ENCODE measurements at regions of chr12 and their contacts with region 1.

Region 1: GRCh38 chr12:22334410-22335290 is at the start of gene ST8SIA1:
- DNase-seq: peak in 1 of 2 experiments; percentile 61
- H3K4me3 ChIP-seq: peak within 1 kb of the TSS; percentile 53 to 89 (median 67)
- H3K27ac ChIP-seq: no peak within 1 kb of the TSS
- H3K4me1 ChIP-seq: peaks cover 0 to 6% (median 0%) of the 10 kb centered on the region in 4 experiments; a peak in 3 of 7 replicates
- H3K27me3 ChIP-seq: peaks cover 6 to 26% (median 17%) of the 10 kb centered on the region in 4 experiments
- CTCF ChIP-seq: no peak
- EP300 ChIP-seq: no peak
- POLR2A ChIP-seq: no peak
- RAD21 ChIP-seq: no peak
- total RNA-seq, gene ST8SIA1: 3.2 and 4.4 TPM in 2 replicates

Region 2: GRCh38 chr12:22121227-22121626 is 213.4 kb before region 1 on chr12:
- CTCF ChIA-PET with region 1: interaction called, 11 read pairs
- POLR2A ChIA-PET with region 1: no interaction called
- DNase-seq: peak in 1 of 2 experiments; percentile 68
- H3K4me3 ChIP-seq: no peak overlapping the region
- H3K27ac ChIP-seq: no peak overlapping the region
- H3K4me1 ChIP-seq: no peaks in the 10 kb centered on the region
- H3K27me3 ChIP-seq: no peaks in the 10 kb centered on the region
- CTCF ChIP-seq: peak; percentile 80 to 84 (median 83)
- EP300 ChIP-seq: no peak
- POLR2A ChIP-seq: no peak
- RAD21 ChIP-seq: peak; percentile 72 to 74

Region 3: GRCh38 chr12:22231836-22232235 is 102.8 kb before region 1 on chr12:
- CTCF ChIA-PET with region 1: interaction called, 11 read pairs
- POLR2A ChIA-PET with region 1: no interaction called
- DNase-seq: no peak
- H3K4me3 ChIP-seq: no peak overlapping the region
- H3K27ac ChIP-seq: no peak overlapping the region
- H3K4me1 ChIP-seq: 0 out of 7 replicates have a peak, but pooled peaks cover 0 to 2% (median 0%) of the 10 kb centered on the region in 4 experiments
- H3K27me3 ChIP-seq: no peaks in the 10 kb centered on the region
- CTCF ChIP-seq: peak in 2 of 3 experiments; percentile 59 to 62; a peak in 3 of 4 replicates
- EP300 ChIP-seq: no peak
- POLR2A ChIP-seq: no peak
- RAD21 ChIP-seq: peak; percentile 60 to 67

Region 4: GRCh38 chr12:22377731-22378496 is 43.3 kb after region 1 on chr12:
- CTCF ChIA-PET with region 1: no interaction called
- POLR2A ChIA-PET with region 1: no interaction called
- DNase-seq: no peak
- H3K4me3 ChIP-seq: no peak overlapping the region
- H3K27ac ChIP-seq: no peak overlapping the region
- H3K4me1 ChIP-seq: no peaks in the 10 kb centered on the region
- H3K27me3 ChIP-seq: no peaks in the 10 kb centered on the region
- CTCF ChIP-seq: no peak
- EP300 ChIP-seq: no peak
- POLR2A ChIP-seq: no peak
- RAD21 ChIP-seq: no peak